ENCODE measurements at regions of chr16 and their contacts with region 1.

Region 1: DNA sequence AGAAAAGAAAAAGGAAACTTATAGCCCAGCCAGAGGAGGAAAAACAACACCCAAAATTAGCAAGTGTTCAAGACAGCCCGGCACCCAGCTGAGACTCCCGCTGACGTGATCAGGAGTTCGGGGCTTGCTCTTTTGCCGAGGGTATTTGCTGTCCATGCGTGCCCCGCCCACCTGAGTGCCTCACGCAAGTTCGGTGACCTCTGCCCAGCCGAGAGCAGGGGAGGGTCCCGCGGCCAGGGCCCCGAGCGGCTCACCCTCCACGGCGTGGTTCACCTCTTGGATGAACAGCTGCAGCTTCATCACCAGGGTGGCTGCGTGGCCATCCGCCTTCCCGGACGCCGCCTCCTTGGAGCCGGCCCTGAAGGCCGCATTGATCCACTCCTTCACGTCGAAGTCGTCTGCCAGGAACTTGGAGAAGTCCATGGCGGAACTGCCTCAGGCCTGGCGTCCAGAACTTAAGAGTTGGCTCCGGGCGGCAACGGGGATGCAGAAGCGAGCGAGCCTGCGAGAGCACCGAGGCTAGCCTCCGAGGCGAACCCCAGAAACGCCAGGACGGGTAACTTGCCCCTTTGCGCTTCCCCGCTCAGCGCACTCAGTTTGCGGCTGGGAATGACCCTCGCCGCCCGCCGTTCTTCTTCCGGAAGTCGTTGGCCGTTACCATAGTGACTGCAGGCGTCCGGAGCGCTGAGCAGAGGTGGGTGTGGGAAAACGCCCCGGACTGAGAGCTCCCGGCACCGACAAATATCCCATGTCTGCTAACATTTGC is at the start of gene COG7:
- DNase-seq: peak; percentile 90 to 93 (median 91)
- ATAC-seq: peak; percentile 93 to 97 (median 97)
- H3K4me3 ChIP-seq: peak within 1 kb of the TSS; percentile 64 to 97 (median 83)
- H3K27ac ChIP-seq: peak within 1 kb of the TSS; percentile 67 to 95 (median 85)
- H3K4me1 ChIP-seq: peaks cover 5 to 34% (median 19%) of the 10 kb centered on the region in 12 donors
- H3K27me3 ChIP-seq: no peaks in the 10 kb centered on the region
- CTCF ChIP-seq: no peak
- POLR2A ChIP-seq: no peak
- total RNA-seq, gene COG7: 7.8 to 16.8 (median 12.2) TPM

Region 2: DNA sequence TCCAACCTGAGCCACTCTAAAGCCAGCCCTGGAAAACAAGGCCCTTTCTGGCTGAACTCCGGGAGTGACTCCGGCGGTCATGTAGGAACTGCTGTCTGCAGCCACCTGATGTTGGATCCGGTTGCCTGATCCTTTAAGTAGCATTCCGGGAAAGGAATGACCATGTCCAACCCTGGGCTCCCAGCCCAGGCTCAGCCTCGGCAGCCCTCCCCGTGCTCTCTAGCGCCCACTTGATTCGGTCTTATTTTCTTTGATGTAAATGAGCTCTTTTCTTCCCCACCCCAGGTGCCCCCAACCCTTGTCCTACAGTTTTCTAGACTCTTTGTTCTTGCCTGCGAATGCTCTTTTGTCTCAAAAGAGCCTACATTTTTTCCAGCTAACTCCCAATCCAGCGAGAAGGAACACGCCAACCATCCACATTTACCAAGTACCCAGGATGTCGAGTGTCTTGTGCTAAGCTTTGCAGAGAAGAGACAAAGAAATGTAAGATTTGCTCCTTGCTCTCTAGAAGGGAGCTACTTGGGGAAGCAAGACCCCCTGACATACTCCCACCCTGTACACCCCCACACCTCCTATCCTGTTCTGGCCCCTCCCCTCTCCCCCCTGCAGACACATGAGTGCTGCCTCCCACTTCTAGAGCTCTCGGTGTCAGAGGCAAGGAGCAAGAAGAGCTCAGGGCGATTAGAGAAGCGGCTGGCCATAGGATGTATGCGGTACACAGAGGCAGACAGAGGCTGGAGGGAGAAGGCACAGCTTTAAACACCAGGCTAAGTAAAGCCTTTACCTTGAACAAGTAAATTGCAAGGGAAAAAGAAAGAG is 53.6 kb before region 1 on chr16:
- intact Hi-C with region 1: loop called in 1 of 10 experiments (anchors 10 kb)
- DNase-seq: peak in 4 of 5 donors; percentile 33 to 63 (median 54)
- ATAC-seq: peak; percentile 83 to 94 (median 86)
- H3K4me3 ChIP-seq: no peak overlapping the region
- H3K27ac ChIP-seq: peak overlapping the region in 9 of 12 donors; percentile 34 to 73 (median 50)
- H3K4me1 ChIP-seq: peaks cover 0 to 17% (median 5%) of the 10 kb centered on the region in 12 donors
- H3K27me3 ChIP-seq: no peaks in the 10 kb centered on the region
- CTCF ChIP-seq: peak in 6 of 12 donors; percentile 11 to 40 (median 26)
- POLR2A ChIP-seq: no peak

Region 3: DNA sequence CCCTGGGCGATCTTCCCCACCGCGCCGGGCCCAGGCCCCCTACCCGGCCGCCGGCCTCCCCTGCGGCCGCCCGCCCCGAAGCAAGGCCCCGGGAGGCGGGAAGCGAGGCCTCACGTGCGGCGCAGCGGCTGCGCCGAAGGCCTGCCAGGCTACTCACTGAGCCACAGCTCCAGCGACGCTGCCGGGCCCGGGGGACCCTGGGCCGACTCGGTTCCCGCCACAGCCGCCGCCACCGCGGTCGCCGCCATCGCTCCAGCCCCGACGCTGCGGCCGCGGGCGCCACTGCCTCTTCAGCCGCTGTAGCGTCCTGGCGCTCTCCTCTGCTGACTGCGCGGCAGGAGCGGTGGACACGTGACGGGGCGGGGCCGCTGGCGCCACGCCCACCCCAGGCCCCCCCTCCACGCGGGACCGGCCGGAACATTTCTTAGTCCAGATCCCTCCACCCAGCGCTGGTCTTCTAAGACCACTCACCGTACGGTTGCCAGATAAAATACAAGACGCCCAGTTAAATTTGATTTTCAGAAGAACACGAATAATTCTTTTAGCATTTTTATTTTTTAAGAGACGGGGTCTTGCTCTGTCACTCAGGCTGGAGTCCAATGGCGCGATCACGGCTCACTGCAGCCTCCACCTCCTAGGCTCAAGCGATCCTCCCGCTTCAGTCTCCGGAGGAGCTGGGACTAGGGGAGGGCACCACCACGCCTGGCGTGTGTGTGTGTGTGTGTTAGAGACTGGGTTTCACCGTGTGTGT is 57.6 kb after region 1 on chr16 and contains the start of gene GGA2:
- intact Hi-C with region 1: loop called in 1 of 10 experiments (anchors 10 kb)
- DNase-seq: peak; percentile 86 to 92 (median 89)
- ATAC-seq: peak; percentile 89 to 95 (median 93)
- H3K4me3 ChIP-seq: peak within 1 kb of the TSS; percentile 65 to 98 (median 78)
- H3K27ac ChIP-seq: peak within 1 kb of the TSS; percentile 27 to 92 (median 85)
- H3K4me1 ChIP-seq: peaks cover 0 to 40% (median 12%) of the 10 kb centered on the region in 12 donors
- H3K27me3 ChIP-seq: no peaks in the 10 kb centered on the region
- CTCF ChIP-seq: peak in 4 of 12 donors; percentile 9 to 31 (median 20)
- POLR2A ChIP-seq: peak; percentile 74 to 93
- total RNA-seq, gene GGA2: 30.8 to 73.8 (median 47.5) TPM

Region 4: GRCh38 chr16:23901178-23902033 is 448.7 kb after region 1 on chr16:
- intact Hi-C with region 1: no loop called
- DNase-seq: no peak
- ATAC-seq: no peak
- H3K4me3 ChIP-seq: no peak overlapping the region
- H3K27ac ChIP-seq: no peak overlapping the region
- H3K4me1 ChIP-seq: peaks cover 0 to 22% (median 0%) of the 10 kb centered on the region in 12 donors
- H3K27me3 ChIP-seq: peaks cover 0 to 5% (median 0%) of the 10 kb centered on the region in 9 donors
- CTCF ChIP-seq: no peak
- POLR2A ChIP-seq: no peak